Heart left ventricle (tissue), 16 donors: ENCODE measurements at regions of chr15 and their contacts with region 1.

Region 1: GRCh38 chr15:81323944-81324881 is at the start of gene STARD5:
- DNase-seq: peak; percentile 99 to 100 (median 99)
- ATAC-seq: peak; percentile 100
- H3K4me3 ChIP-seq: peak within 1 kb of the TSS; percentile 45 to 99 (median 78)
- H3K27ac ChIP-seq: peak within 1 kb of the TSS in 9 of 12 donors; percentile 22 to 80 (median 54)
- H3K4me1 ChIP-seq: peaks cover 0 to 18% (median 7%) of the 10 kb centered on the region in 12 donors
- H3K27me3 ChIP-seq: no peaks in the 10 kb centered on the region
- CTCF ChIP-seq: no peak
- POLR2A ChIP-seq: peak in 1 of 2 donors; percentile 75
- total RNA-seq, gene STARD5: 0.49 to 3.0 (median 1.4) TPM

Region 2: GRCh38 chr15:80989518-80990478 is 334.4 kb before region 1 on chr15 and contains the start of gene MESD:
- intact Hi-C with region 1: loop called in 1 of 10 experiments (anchors 5 kb)
- DNase-seq: peak; percentile 98 to 99 (median 99)
- ATAC-seq: peak; percentile 97 to 99 (median 98)
- H3K4me3 ChIP-seq: peak within 1 kb of the TSS; percentile 75 to 97 (median 88)
- H3K27ac ChIP-seq: peak within 1 kb of the TSS; percentile 80 to 96 (median 92)
- H3K4me1 ChIP-seq: peaks cover 10 to 67% (median 55%) of the 10 kb centered on the region in 12 donors
- H3K27me3 ChIP-seq: no peaks in the 10 kb centered on the region
- CTCF ChIP-seq: no peak
- POLR2A ChIP-seq: peak; percentile 36 to 94
- total RNA-seq, gene MESD: 11.2 to 19.8 (median 14.8) TPM

Region 3: DNA sequence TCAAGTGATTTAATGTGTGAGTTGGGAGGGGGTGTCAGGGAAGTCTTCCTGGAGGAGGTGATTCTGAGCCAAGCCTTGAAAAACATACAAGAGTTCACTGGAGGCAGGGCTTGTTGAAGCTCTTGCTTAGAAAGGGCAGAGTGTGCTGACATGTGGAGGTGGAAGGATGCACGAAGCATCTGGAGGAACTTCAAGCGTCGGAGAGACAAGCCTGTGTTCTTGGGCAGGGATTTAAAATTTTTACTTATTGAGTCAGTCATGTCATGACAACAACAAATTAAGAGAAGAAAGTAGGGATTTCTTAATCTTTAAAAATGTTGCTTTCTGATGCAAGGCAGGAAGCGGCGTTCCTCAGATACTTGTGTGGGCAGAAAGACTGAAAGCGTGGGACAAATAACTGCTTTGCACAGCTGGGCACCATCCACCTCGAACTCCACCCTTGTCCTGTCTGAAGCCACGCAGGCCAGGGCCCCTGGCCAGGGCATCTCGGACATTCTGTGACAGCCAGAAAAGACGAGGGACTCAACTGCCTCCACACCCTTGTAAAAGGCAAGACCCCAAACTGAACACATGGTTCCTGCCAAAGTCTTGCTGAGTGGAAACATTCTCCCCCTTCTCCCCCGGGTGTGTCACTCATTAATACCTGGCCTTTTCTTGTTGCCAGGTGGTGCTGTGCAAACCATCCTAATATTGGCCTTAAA is 134.5 kb before region 1 on chr15:
- intact Hi-C with region 1: loop called in 1 of 10 experiments (anchors 10 kb)
- DNase-seq: peak; percentile 39 to 77 (median 73)
- ATAC-seq: peak; percentile 83 to 92 (median 88)
- H3K4me3 ChIP-seq: no peak overlapping the region
- H3K27ac ChIP-seq: peak overlapping the region in 11 of 12 donors; percentile 7 to 88 (median 62)
- H3K4me1 ChIP-seq: peaks cover 0 to 9% (median 0%) of the 10 kb centered on the region in 12 donors
- H3K27me3 ChIP-seq: peaks cover 0 to 6% (median 0%) of the 10 kb centered on the region in 9 donors
- CTCF ChIP-seq: no peak
- POLR2A ChIP-seq: no peak

Region 4: GRCh38 chr15:81274931-81275707 is 49.1 kb before region 1 on chr15:
- intact Hi-C with region 1: loop called in 1 of 10 experiments (anchors 5 kb)
- DNase-seq: peak; percentile 74 to 83 (median 78)
- ATAC-seq: peak; percentile 62 to 94 (median 88)
- H3K4me3 ChIP-seq: no peak overlapping the region
- H3K27ac ChIP-seq: peak overlapping the region in 10 of 12 donors; percentile 12 to 70 (median 48)
- H3K4me1 ChIP-seq: peaks cover 0 to 16% (median 4%) of the 10 kb centered on the region in 12 donors
- H3K27me3 ChIP-seq: peaks cover 0 to 3% (median 0%) of the 10 kb centered on the region in 9 donors
- CTCF ChIP-seq: peak; percentile 65 to 90 (median 78)
- POLR2A ChIP-seq: no peak

Region 5: DNA sequence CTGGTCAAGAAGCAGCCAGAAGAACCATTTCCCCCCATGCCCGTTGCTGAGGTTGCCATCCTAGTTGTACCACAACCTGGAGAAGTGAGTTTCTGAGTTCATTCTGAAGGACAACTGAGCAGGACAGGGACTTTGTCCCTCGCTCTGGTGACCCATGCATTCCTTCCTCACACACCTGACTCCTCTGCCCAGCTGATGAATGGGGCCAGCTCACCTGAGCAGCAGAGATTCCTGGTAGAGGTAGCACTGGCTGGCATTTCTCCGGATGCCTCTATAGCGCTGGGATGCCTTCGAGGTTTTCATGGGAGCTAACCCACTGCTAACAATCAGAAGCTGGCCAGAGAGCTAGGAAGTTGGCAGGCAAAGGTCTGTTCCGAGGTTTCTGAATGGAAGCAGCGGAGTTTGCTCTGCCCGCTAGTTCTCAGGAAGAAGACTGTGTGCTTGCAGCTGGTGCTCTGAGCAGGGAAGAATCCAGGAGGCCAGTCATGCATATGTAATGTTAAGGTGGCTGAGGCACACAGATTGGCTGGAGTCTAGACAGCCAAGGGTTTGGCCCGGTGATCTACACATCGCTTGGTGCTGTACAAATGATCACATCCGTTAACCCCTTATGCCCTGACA is 49.7 kb after region 1 on chr15 and contains the start of gene TMC3:
- intact Hi-C with region 1: loop called in 1 of 10 experiments (anchors 10 kb)
- DNase-seq: no peak
- ATAC-seq: no peak
- H3K4me3 ChIP-seq: no peak within 1 kb of the TSS
- H3K27ac ChIP-seq: no peak within 1 kb of the TSS
- H3K4me1 ChIP-seq: peaks cover 0 to 5% (median 0%) of the 10 kb centered on the region in 12 donors
- H3K27me3 ChIP-seq: no peaks in the 10 kb centered on the region
- CTCF ChIP-seq: no peak
- POLR2A ChIP-seq: no peak
- total RNA-seq, gene TMC3: 0.19 TPM in 1 of 9 donors, not detected in the others

Region 6: GRCh38 chr15:81589671-81590070 is 265.5 kb after region 1 on chr15:
- intact Hi-C with region 1: no loop called
- DNase-seq: no peak
- ATAC-seq: no peak
- H3K4me3 ChIP-seq: no peak overlapping the region
- H3K27ac ChIP-seq: no peak overlapping the region
- H3K4me1 ChIP-seq: no peaks in the 10 kb centered on the region
- H3K27me3 ChIP-seq: no peaks in the 10 kb centered on the region
- CTCF ChIP-seq: no peak
- POLR2A ChIP-seq: no peak